Psoas muscle (tissue), 8 donors: ENCODE measurements at regions of chr11 and their contacts with region 1.

Region 1: GRCh38 chr11:34313099-34313517 is 44.7 kb downstream of the ABTB2 start:
- DNase-seq: peak; percentile 58 to 74
- ATAC-seq: peak; percentile 61 to 91 (median 80)
- H3K4me3 ChIP-seq: no peak overlapping the region
- H3K27ac ChIP-seq: peak overlapping the region; percentile 94
- H3K4me1 ChIP-seq: peaks cover 86% of the 10 kb centered on the region
- H3K27me3 ChIP-seq: no peaks in the 10 kb centered on the region
- CTCF ChIP-seq: no peak

Region 2: GRCh38 chr11:34185926-34186841 is 126.9 kb before region 1 on chr11:
- intact Hi-C with region 1: no loop called
- DNase-seq: no peak
- ATAC-seq: no peak
- H3K4me3 ChIP-seq: no peak overlapping the region
- H3K27ac ChIP-seq: no peak overlapping the region
- H3K4me1 ChIP-seq: peaks cover 6% of the 10 kb centered on the region
- H3K27me3 ChIP-seq: no peaks in the 10 kb centered on the region
- CTCF ChIP-seq: no peak

Region 3: GRCh38 chr11:34266090-34266912 is 46.8 kb before region 1 on chr11:
- intact Hi-C with region 1: loop called in 1 of 2 experiments (anchors 5 kb)
- DNase-seq: peak in 1 of 2 donors; percentile 38
- ATAC-seq: peak in 1 of 4 donors; percentile 16
- H3K4me3 ChIP-seq: no peak overlapping the region
- H3K27ac ChIP-seq: no peak overlapping the region
- H3K4me1 ChIP-seq: peaks cover 36% of the 10 kb centered on the region
- H3K27me3 ChIP-seq: no peaks in the 10 kb centered on the region
- CTCF ChIP-seq: no peak

Region 4: DNA sequence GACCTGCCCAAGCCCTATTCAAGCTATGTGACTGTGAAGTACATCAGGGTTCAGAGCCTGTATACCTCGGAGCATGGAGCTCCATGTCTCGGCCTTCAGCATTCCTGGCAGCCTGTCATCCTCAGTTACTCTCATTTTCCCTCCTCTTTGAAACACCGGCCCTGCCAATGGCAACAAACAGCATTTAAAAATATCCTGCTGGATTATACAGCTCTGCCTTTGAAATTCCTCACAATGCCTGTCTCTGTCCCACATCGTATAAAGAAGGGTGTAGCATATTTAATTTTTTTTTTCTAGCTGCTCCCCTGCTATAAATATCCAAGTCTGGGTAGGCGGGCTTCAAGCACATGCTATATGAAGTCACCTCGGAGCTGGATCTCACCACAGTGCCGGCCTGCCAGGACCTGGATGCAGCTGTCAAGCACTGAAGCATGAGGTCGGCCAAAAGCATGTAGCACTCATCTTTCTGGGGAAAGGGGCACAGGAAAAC is 32.9 kb after region 1 on chr11:
- intact Hi-C with region 1: loop called in 1 of 2 experiments (anchors 2 kb)
- DNase-seq: peak; percentile 53 to 81
- ATAC-seq: peak; percentile 85 to 89 (median 86)
- H3K4me3 ChIP-seq: peak overlapping the region; percentile 35
- H3K27ac ChIP-seq: peak overlapping the region; percentile 83
- H3K4me1 ChIP-seq: peaks cover 88% of the 10 kb centered on the region
- H3K27me3 ChIP-seq: no peaks in the 10 kb centered on the region
- CTCF ChIP-seq: no peak

Region 5: DNA sequence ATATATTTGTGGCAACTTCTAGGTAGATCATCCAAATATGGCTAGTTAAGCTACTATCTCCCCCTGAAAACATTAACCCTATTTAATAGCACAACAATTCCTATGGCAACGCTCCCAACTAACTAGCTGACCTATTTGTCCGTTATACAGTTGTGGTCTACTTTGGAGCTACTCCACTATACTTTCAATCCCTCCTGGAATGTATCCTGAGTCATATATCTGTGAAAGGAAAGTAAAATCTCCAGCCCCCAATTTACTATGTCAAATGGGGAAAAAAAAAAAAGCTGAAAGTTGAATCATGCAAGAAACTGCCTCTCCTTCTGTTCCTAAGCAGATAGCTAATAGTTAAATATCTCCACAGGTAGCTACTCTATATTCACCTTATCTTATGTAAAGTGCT is 954.4 kb after region 1 on chr11:
- intact Hi-C with region 1: no loop called
- DNase-seq: no peak
- ATAC-seq: no peak
- H3K4me3 ChIP-seq: no peak overlapping the region
- H3K27ac ChIP-seq: no peak overlapping the region
- H3K4me1 ChIP-seq: no peaks in the 10 kb centered on the region
- H3K27me3 ChIP-seq: no peaks in the 10 kb centered on the region
- CTCF ChIP-seq: no peak